ENCODE measurements at regions of chr3 and their contacts with region 1.

Region 1: GRCh38 chr3:183122257-183122932 is 23.1 kb upstream of the MCCC1 start:
- DNase-seq: peak in 2 of 5 donors; percentile 56 to 77
- H3K4me3 ChIP-seq: no peak overlapping the region
- H3K27ac ChIP-seq: no peak overlapping the region
- H3K4me1 ChIP-seq: no peaks in the 10 kb centered on the region
- H3K27me3 ChIP-seq: no peaks in the 10 kb centered on the region
- CTCF ChIP-seq: peak; percentile 78

Region 2: DNA sequence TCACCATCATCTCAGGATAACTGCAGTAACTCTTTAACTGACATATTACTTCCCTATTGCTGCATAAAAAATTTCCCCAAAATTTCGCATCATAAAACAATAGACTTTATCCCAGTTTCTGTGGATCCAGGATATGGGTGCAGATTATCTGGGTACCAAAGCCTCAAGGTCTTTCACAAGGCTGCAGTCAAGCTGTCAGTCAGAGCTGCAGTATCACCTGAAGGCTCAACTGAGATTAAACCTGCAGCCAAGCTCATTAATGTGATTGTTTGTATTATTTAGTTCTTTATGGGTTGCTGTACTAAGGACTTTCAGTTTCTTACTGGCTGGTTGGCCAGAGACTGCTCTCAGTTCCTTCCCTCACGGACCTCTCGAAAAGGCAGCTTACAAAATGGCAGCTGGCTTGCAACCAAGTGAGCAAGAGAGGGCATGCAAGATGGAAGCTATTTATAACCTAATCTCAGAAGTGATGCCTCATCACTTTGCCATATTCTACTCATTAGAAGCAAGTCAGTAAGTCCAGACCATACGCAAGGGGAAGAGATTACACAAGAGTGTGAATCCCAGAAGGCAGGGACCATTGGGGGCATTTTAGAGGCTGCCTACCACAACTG is 197.0 kb before region 1 on chr3:
- intact Hi-C with region 1: no loop called
- DNase-seq: no peak
- H3K4me3 ChIP-seq: no peak overlapping the region
- H3K27ac ChIP-seq: no peak overlapping the region
- H3K4me1 ChIP-seq: peaks cover 0 to 4% (median 0%) of the 10 kb centered on the region in 3 donors
- H3K27me3 ChIP-seq: no peaks in the 10 kb centered on the region
- CTCF ChIP-seq: no peak

Region 3: DNA sequence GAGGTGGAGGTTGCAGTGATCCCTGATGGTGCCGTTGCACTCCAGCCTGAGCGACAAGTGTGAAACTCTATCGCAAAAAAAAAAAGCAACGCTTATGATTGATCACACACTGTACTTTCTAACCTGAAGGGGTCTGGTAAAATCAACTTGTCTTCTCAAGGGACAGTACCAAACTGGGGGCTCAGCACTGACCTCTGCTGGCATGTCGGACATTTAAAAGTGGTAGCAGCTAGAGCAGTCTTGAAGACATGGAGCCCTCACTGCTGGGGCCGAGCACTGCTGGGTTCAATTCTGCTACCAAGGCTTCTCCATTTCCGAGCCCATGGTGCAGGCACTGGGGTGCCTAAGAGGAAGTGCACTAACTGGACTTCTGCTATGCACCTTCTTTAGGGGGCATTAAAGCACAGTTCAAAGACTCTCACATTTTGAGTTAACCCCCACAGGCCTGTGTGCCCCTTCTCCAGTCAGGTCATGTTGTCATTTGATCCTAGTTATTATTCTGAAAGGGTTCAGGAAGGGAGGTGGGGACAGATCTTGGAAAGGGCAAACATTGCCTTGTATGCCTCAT is 66.6 kb after region 1 on chr3:
- intact Hi-C with region 1: no loop called
- DNase-seq: peak in 3 of 5 donors; percentile 38 to 52 (median 48)
- H3K4me3 ChIP-seq: no peak overlapping the region
- H3K27ac ChIP-seq: no peak overlapping the region
- H3K4me1 ChIP-seq: peaks cover 0 to 6% (median 0%) of the 10 kb centered on the region in 3 donors
- H3K27me3 ChIP-seq: no peaks in the 10 kb centered on the region
- CTCF ChIP-seq: peak; percentile 28

Region 4: GRCh38 chr3:183224180-183224970 is 102.0 kb after region 1 on chr3:
- intact Hi-C with region 1: no loop called
- DNase-seq: no peak
- H3K4me3 ChIP-seq: no peak overlapping the region
- H3K27ac ChIP-seq: no peak overlapping the region
- H3K4me1 ChIP-seq: no peaks in the 10 kb centered on the region
- H3K27me3 ChIP-seq: no peaks in the 10 kb centered on the region
- CTCF ChIP-seq: no peak

Region 5: DNA sequence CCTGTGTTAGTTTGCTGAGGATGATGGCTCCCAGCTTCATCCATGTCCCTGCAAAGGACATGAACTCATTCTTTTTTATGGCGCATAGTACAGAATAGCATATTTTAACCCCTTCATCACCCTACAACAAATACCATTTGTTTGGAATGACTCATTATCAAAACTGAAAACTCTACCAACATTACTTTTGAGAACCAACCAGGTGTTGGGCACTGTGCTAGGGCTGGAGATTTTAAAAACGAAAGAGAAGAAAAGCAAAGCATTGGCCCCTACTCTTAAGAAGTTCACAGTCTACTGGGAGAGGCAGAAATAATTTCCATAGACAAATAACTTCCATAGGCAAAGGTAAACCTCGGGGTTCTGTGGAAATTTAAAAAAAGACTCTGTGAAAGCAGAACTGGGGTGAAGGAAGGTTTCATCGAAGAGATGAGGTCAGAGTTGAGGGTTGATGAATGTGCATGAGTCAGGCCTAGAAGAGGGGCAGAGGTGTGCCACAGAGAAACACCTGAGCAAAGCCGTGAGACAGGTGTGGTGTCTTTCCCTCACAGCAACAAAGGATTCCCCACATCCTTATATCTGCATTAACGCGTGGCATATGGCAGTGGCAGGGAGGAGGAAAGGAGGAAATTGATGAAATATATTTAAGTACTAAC is 255.0 kb after region 1 on chr3:
- intact Hi-C with region 1: loop called (anchors 5 kb)
- DNase-seq: no peak
- H3K4me3 ChIP-seq: no peak overlapping the region
- H3K27ac ChIP-seq: no peak overlapping the region
- H3K4me1 ChIP-seq: no peaks in the 10 kb centered on the region
- H3K27me3 ChIP-seq: no peaks in the 10 kb centered on the region
- CTCF ChIP-seq: no peak

Region 6: GRCh38 chr3:183775781-183776180 is 653.4 kb after region 1 on chr3:
- intact Hi-C with region 1: no loop called
- DNase-seq: no peak
- H3K4me3 ChIP-seq: no peak overlapping the region
- H3K27ac ChIP-seq: no peak overlapping the region
- H3K4me1 ChIP-seq: no peaks in the 10 kb centered on the region
- H3K27me3 ChIP-seq: no peaks in the 10 kb centered on the region
- CTCF ChIP-seq: no peak

Measured in kidney (tissue), 22 donors.